CD8-positive, alpha-beta memory T cell (primary cell): ENCODE measurements at regions of chr9 and their contacts with region 1.

Region 1: DNA sequence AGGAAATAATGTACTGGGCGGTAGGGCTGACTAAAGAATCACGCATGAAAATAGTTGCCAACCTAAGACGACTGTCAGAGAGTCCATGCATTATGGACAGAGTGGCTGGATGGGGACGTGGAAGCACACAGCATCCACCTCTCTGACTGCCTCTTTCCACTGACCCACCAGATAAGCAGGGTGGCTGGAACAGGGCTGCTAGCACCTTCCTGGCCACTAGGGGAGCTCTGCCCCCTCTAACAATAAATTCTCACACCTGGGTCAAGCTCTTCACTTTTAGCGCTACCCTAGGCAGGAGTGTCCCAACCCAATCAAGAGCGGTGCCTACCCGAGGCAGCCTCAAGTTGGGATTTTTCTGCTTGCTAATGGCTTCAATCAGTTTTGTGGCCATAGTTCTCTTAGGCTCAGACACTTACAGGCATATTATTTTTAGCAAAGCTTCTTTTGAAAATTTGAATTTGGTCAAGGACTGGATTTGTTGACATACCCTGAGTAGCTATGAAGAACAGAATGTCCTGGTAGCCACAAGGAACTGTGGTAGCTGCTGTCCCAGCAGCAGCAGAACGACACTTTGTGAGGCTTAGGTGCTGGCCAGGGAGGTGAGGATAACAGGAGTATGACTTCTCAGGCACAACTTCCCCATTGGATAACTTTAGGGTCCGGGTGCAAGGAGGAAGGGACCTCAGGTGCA is 6.9 kb upstream of the TPM2 start:
- DNase-seq: peak; percentile 36 to 71 (median 56)
- H3K4me3 ChIP-seq: no peak overlapping the region
- H3K4me3 Mint-ChIP-seq: peak overlapping the region in 2 of 7 donors; percentile 17 to 48
- H3K27ac ChIP-seq: no peak overlapping the region
- H3K27ac Mint-ChIP-seq: peak overlapping the region; percentile 47 to 94 (median 82)
- H3K4me1 ChIP-seq: no peaks in the 10 kb centered on the region
- H3K4me1 Mint-ChIP-seq: peaks cover 7 to 14% (median 13%) of the 10 kb centered on the region in 3 donors
- H3K27me3 ChIP-seq: no peaks in the 10 kb centered on the region
- H3K27me3 Mint-ChIP-seq: no peaks in the 10 kb centered on the region

Region 2: GRCh38 chr9:35385042-35385441 is 311.6 kb before region 1 on chr9:
- CTCF ChIA-PET with region 1: no interaction called
- POLR2A ChIA-PET with region 1: no interaction called
- DNase-seq: no peak
- H3K4me3 ChIP-seq: no peak overlapping the region
- H3K4me3 Mint-ChIP-seq: no peak overlapping the region
- H3K27ac ChIP-seq: no peak overlapping the region
- H3K27ac Mint-ChIP-seq: no peak overlapping the region
- H3K4me1 ChIP-seq: no peaks in the 10 kb centered on the region
- H3K4me1 Mint-ChIP-seq: no peaks in the 10 kb centered on the region
- H3K27me3 ChIP-seq: no peaks in the 10 kb centered on the region
- H3K27me3 Mint-ChIP-seq: peaks cover 5 to 27% of the 10 kb centered on the region in 2 donors

Region 3: GRCh38 chr9:35603987-35604577 is 92.6 kb before region 1 on chr9:
- CTCF ChIA-PET with region 1: interaction called, 54 read pairs
- POLR2A ChIA-PET with region 1: interaction called, 5 read pairs
- DNase-seq: peak; percentile 99 to 100 (median 99)
- H3K4me3 ChIP-seq: peak overlapping the region; percentile 99
- H3K4me3 Mint-ChIP-seq: peak overlapping the region; percentile 94 to 99 (median 98)
- H3K27ac ChIP-seq: peak overlapping the region; percentile 87
- H3K27ac Mint-ChIP-seq: peak overlapping the region; percentile 96 to 100 (median 98)
- H3K4me1 ChIP-seq: peaks cover 21% of the 10 kb centered on the region
- H3K4me1 Mint-ChIP-seq: peaks cover 33 to 38% (median 34%) of the 10 kb centered on the region in 3 donors
- H3K27me3 ChIP-seq: no peaks in the 10 kb centered on the region
- H3K27me3 Mint-ChIP-seq: peaks cover 0 to 2% of the 10 kb centered on the region in 2 donors

Region 4: DNA sequence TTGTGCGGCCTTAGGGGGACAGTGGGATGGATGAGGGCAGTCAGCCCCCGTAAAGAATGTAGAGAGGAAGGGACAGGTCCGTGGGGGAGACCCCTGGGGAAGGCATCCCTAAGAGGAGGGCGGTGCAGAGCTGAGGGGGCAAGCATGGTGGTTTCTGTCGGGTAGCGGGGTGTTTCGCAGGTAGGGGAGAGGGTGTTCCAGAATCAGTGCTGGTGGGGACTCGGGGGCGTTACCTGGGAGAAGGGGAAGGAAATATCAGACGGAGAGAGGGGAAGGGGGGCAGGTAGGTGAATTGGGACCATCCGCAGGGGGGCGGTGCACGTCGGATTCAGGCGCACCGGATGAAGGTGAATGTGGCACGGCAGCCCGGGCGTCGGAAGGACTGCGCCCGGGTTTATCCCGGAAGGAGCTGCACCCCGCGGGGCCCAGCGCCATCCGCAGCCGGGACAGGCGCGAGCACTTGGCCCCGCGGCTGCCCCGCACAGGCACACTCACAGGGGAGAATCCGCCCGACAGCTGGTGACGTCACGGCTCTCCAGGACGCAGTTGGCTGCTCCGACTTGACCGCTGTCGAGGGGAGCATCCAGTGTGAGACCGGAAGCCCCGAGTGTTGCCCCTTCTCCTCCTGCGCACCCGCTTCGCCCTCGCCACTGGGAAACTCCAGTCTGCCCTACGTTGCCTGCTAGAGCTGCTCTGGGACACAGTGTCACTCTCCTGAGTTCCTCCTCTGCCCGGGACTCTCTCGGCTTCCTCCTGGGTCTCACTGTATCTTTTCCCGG is 79.8 kb before region 1 on chr9:
- CTCF ChIA-PET with region 1: interaction called, 54 read pairs
- POLR2A ChIA-PET with region 1: no interaction called
- DNase-seq: peak; percentile 63 to 84 (median 71)
- H3K4me3 ChIP-seq: peak overlapping the region; percentile 82
- H3K4me3 Mint-ChIP-seq: peak overlapping the region; percentile 85 to 92 (median 89)
- H3K27ac ChIP-seq: peak overlapping the region; percentile 70
- H3K27ac Mint-ChIP-seq: peak overlapping the region; percentile 89 to 100 (median 98)
- H3K4me1 ChIP-seq: peaks cover 34% of the 10 kb centered on the region
- H3K4me1 Mint-ChIP-seq: peaks cover 42 to 49% (median 46%) of the 10 kb centered on the region in 3 donors
- H3K27me3 ChIP-seq: no peaks in the 10 kb centered on the region
- H3K27me3 Mint-ChIP-seq: peaks cover 0 to 1% of the 10 kb centered on the region in 2 donors

Region 5: GRCh38 chr9:35664531-35665470 is 31.9 kb before region 1 on chr9 and contains the start of gene ARHGEF39:
- CTCF ChIA-PET with region 1: interaction called, 82 read pairs
- POLR2A ChIA-PET with region 1: interaction called, 3 read pairs
- DNase-seq: peak; percentile 60 to 79 (median 71)
- H3K4me3 ChIP-seq: peak within 1 kb of the TSS; percentile 84
- H3K4me3 Mint-ChIP-seq: peak within 1 kb of the TSS; percentile 87 to 91 (median 89)
- H3K27ac ChIP-seq: peak within 1 kb of the TSS; percentile 39
- H3K27ac Mint-ChIP-seq: peak within 1 kb of the TSS; percentile 73 to 100 (median 97)
- H3K4me1 ChIP-seq: peaks cover 52% of the 10 kb centered on the region
- H3K4me1 Mint-ChIP-seq: peaks cover 53 to 68% (median 64%) of the 10 kb centered on the region in 3 donors
- H3K27me3 ChIP-seq: no peaks in the 10 kb centered on the region
- H3K27me3 Mint-ChIP-seq: peaks cover 0 to 2% of the 10 kb centered on the region in 2 donors
- total RNA-seq, gene ARHGEF39: 7.7 to 10.7 TPM

Region 6: GRCh38 chr9:35716230-35716629 is 19.6 kb after region 1 on chr9:
- CTCF ChIA-PET with region 1: interaction called, 40 read pairs
- POLR2A ChIA-PET with region 1: no interaction called
- DNase-seq: no peak
- H3K4me3 ChIP-seq: no peak overlapping the region
- H3K4me3 Mint-ChIP-seq: no peak overlapping the region
- H3K27ac ChIP-seq: no peak overlapping the region
- H3K27ac Mint-ChIP-seq: peak overlapping the region in 7 of 8 donors; percentile 29 to 92 (median 72)
- H3K4me1 ChIP-seq: no peaks in the 10 kb centered on the region
- H3K4me1 Mint-ChIP-seq: no peaks in the 10 kb centered on the region
- H3K27me3 ChIP-seq: no peaks in the 10 kb centered on the region
- H3K27me3 Mint-ChIP-seq: no peaks in the 10 kb centered on the region

Region 7: DNA sequence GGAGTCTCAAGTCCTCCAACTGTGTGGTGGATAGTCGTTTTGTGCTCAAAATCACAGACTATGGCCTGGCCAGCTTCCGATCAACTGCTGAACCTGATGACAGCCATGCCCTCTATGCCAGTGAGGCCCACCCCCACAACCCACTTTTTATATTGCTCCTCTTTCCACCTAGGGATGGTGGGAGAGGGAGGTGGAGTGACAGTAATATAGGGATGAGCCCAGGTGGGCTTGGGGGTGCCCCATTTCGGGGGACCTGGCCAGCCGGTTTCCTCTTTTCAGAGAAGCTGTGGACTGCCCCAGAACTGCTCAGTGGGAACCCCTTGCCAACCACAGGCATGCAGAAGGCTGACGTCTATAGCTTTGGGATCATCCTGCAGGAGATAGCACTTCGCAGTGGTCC is 108.9 kb after region 1 on chr9:
- CTCF ChIA-PET with region 1: no interaction called
- POLR2A ChIA-PET with region 1: no interaction called
- DNase-seq: no peak
- H3K4me3 ChIP-seq: no peak overlapping the region
- H3K4me3 Mint-ChIP-seq: no peak overlapping the region
- H3K27ac ChIP-seq: no peak overlapping the region
- H3K27ac Mint-ChIP-seq: no peak overlapping the region
- H3K4me1 ChIP-seq: no peaks in the 10 kb centered on the region
- H3K4me1 Mint-ChIP-seq: peaks cover 0 to under 1% (median 0%) of the 10 kb centered on the region in 3 donors
- H3K27me3 ChIP-seq: no peaks in the 10 kb centered on the region
- H3K27me3 Mint-ChIP-seq: peaks cover 0 to 1% of the 10 kb centered on the region in 2 donors

Region 8: DNA sequence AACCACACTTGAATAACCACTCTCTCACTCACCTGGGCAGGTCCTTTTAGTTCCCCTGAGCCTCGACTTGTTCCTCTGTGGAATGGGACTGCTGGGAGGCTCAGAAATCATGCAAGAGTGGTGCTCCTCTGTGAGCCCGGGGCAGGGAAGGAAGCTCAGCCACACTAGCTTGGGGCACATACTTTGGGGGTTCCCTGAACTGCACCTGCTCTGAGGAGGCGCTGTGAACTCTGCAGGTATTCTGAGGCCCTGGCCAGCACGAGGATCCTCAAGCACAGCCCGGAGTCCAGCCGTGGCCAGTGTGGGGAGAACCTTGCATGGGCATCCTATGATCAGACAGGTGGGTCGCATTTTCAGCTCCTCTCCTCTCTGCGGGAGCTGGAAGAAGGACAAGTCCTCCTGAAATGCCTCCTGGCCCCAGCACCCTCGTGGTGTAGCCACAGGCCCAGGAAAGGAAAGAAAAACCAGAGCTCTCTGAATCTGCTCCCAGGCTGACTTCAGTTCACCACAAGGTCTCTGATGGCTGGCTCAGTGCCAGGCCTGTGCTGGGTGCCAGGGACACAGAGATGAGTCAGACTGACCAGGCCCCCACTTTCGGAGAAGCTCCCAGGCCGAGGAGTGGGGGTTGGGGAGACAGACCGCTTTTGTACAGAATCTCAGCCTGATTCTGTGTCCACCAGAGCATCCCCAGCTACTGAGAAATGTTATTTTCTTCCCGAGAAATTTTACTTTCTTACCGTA is 451.8 kb after region 1 on chr9:
- CTCF ChIA-PET with region 1: no interaction called
- POLR2A ChIA-PET with region 1: no interaction called
- DNase-seq: peak; percentile 40 to 89 (median 67)
- H3K4me3 ChIP-seq: no peak overlapping the region
- H3K4me3 Mint-ChIP-seq: peak overlapping the region in 5 of 7 donors; percentile 47 to 75 (median 61)
- H3K27ac ChIP-seq: no peak overlapping the region
- H3K27ac Mint-ChIP-seq: peak overlapping the region; percentile 77 to 97 (median 92)
- H3K4me1 ChIP-seq: peaks cover 96% of the 10 kb centered on the region
- H3K4me1 Mint-ChIP-seq: peaks cover 85 to 96% (median 90%) of the 10 kb centered on the region in 3 donors
- H3K27me3 ChIP-seq: no peaks in the 10 kb centered on the region
- H3K27me3 Mint-ChIP-seq: peaks cover 0 to 3% of the 10 kb centered on the region in 2 donors